ENCODE measurements at regions of chr9 and their contacts with region 1.

Region 1: DNA sequence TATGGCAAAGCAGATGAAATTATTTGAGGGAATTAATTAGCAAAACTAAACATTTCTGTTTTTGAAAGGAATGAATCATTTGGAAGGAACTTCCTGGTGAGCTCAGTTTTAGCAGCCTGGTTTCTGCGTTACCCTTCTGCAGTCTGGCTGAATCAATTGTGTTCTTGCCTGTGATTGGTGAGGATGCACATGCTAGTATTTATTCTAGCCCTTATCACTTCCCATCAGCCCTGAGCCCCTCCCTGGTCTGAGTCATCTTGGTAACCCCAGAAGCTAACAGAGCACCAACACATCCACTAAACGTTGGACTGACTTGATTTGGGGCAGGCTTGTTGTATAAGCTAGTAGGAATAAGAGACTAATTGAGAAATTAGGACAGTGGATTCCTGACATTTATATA is 6.6 kb downstream of the TJP2 start:
- DNase-seq: peak; percentile 47
- H3K4me3 ChIP-seq: no peak overlapping the region
- H3K27ac ChIP-seq: peak overlapping the region in 1 of 2 donors; percentile 41
- H3K4me1 ChIP-seq: no peaks in the 10 kb centered on the region
- H3K27me3 ChIP-seq: no peaks in the 10 kb centered on the region
- CTCF ChIP-seq: no peak
- POLR2A ChIP-seq: no peak

Region 2: DNA sequence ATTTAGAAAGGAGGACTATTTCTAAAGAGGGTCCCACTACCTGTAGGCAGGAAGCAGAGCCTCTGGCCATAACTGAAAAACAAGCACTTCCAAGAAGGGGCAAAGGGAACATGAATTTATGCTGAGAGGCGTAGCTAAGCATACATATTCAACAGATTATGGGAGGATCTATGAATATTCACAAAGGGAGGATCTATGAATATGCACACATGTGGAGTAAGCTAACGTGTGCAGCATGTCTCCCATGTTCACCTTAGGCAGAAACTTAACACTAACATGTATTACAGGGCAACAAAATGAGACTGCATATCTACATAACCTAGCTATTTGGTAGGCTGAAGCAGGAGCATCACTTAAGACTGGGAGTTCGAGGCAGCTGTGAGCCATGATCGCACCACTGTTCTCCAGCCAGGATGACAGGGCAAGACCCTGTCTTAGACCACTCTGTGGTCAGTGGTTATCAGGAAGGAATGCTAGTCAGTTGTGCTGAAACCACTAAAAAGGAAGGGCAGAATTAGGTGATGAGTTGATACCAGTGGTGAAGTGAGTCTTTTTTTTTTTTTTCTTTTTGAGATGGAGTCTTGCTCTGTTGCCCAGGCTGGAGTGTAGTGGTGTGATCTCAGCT is 124.4 kb before region 1 on chr9:
- intact Hi-C with region 1: no loop called
- DNase-seq: no peak
- H3K4me3 ChIP-seq: no peak overlapping the region
- H3K27ac ChIP-seq: no peak overlapping the region
- H3K4me1 ChIP-seq: no peaks in the 10 kb centered on the region
- H3K27me3 ChIP-seq: no peaks in the 10 kb centered on the region
- CTCF ChIP-seq: no peak
- POLR2A ChIP-seq: no peak

Region 3: GRCh38 chr9:69131682-69132081 is 49.0 kb before region 1 on chr9:
- intact Hi-C with region 1: loop called (anchors 10 kb)
- DNase-seq: peak; percentile 25
- H3K4me3 ChIP-seq: no peak overlapping the region
- H3K27ac ChIP-seq: peak overlapping the region; percentile 0 to 39
- H3K4me1 ChIP-seq: no peaks in the 10 kb centered on the region
- H3K27me3 ChIP-seq: no peaks in the 10 kb centered on the region
- CTCF ChIP-seq: no peak
- POLR2A ChIP-seq: no peak